AG04450 (cell line): ENCODE measurements at regions of chr10 and their contacts with region 1.

Region 1: GRCh38 chr10:6079044-6079443 is 9.8 kb upstream of the RBM17 start:
- DNase-seq: no peak
- H3K4me3 ChIP-seq: no peak overlapping the region
- H3K27ac ChIP-seq: no peak overlapping the region
- H3K27me3 ChIP-seq: peaks cover 25% of the 10 kb centered on the region
- CTCF ChIP-seq: no peak

Region 2: GRCh38 chr10:6065835-6066234 is 13.2 kb before region 1 on chr10:
- CTCF ChIA-PET with region 1: no interaction called
- POLR2A ChIA-PET with region 1: interaction called, 10 read pairs
- DNase-seq: no peak
- H3K4me3 ChIP-seq: no peak overlapping the region
- H3K27ac ChIP-seq: no peak overlapping the region
- H3K27me3 ChIP-seq: peaks cover 21% of the 10 kb centered on the region
- CTCF ChIP-seq: no peak